ENCODE measurements at regions of chr11 and their contacts with region 1.

Region 1: DNA sequence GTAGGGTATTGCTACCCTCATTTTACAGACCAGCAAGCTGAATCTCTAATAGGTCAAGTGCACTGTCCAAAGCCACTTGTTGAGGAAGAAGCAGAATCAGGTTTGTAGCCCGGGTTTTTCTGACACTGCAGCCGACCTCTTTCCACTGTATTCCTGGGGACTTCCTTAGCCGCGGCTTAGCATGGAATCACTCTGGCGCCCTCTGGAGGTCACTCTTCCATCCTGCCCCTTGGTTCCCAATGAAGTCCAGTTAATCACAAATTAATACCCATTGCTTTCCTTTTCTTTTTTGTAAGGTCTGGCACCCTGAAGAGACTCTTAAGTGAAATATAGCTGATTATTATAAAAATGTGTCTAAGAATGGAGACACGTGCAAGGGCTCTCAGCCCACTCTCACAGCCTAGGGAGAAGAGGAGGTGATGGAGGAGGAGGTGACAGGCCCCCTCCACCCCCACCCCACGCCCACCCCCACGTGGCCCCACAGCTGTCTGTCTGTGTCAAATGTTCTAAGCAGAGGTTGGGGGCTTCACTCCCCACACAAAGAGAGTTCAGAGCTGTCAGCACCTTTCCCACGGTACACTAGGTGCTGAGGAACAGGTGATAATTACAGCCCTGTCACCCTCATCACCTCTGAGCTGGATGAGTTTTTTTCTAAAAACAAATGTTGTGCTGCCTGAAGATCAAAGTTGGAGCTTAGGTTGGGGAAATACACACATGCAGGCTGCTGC is 57.7 kb upstream of the DRD2 start:
- DNase-seq: peak; percentile 69
- CTCF ChIP-seq: peak; percentile 78

Region 2: GRCh38 chr11:113184498-113184897 is 348.4 kb before region 1 on chr11:
- CTCF ChIA-PET with region 1: no interaction called
- POLR2A ChIA-PET with region 1: no interaction called
- DNase-seq: no peak
- CTCF ChIP-seq: no peak

Region 3: GRCh38 chr11:113305440-113306336 is 227.2 kb before region 1 on chr11:
- CTCF ChIA-PET with region 1: interaction called, 70 read pairs
- POLR2A ChIA-PET with region 1: no interaction called
- DNase-seq: peak; percentile 61
- CTCF ChIP-seq: peak; percentile 97

Region 4: GRCh38 chr11:113314389-113315301 is 218.2 kb before region 1 on chr11 and contains the start of gene TTC12:
- CTCF ChIA-PET with region 1: interaction called, 28 read pairs
- POLR2A ChIA-PET with region 1: no interaction called
- DNase-seq: peak; percentile 95
- CTCF ChIP-seq: no peak

Region 5: GRCh38 chr11:113411536-113411935 is 121.3 kb before region 1 on chr11:
- CTCF ChIA-PET with region 1: no interaction called
- POLR2A ChIA-PET with region 1: no interaction called
- DNase-seq: no peak
- CTCF ChIP-seq: no peak

Region 6: GRCh38 chr11:113514856-113515255 is 18.0 kb before region 1 on chr11:
- CTCF ChIA-PET with region 1: interaction called, 34 read pairs
- POLR2A ChIA-PET with region 1: no interaction called
- DNase-seq: no peak
- CTCF ChIP-seq: no peak

Region 7: GRCh38 chr11:113519989-113520613 is 12.8 kb before region 1 on chr11:
- CTCF ChIA-PET with region 1: interaction called, 34 read pairs
- POLR2A ChIA-PET with region 1: no interaction called
- DNase-seq: no peak
- CTCF ChIP-seq: no peak

Region 8: DNA sequence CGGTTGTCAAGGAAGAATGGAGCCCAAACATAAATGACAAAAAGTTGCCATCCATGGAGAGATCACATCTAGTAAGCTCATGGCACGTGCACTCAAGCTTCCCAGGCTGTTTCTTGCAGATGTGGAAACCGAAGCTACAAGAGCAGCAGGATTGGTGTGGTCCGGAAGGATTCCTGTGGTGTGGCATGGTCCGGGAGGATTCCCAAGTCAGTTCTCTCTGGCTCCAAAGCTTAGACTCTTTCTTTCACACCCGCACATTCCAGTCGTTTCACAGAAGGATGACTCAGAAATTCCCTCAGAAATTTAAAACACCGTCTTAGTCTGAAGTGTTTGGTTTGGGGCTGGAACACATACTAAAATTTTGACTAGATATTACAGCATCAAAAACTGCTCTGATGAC is 20.4 kb after region 1 on chr11:
- CTCF ChIA-PET with region 1: no interaction called
- POLR2A ChIA-PET with region 1: no interaction called
- DNase-seq: no peak
- CTCF ChIP-seq: no peak

Region 9: DNA sequence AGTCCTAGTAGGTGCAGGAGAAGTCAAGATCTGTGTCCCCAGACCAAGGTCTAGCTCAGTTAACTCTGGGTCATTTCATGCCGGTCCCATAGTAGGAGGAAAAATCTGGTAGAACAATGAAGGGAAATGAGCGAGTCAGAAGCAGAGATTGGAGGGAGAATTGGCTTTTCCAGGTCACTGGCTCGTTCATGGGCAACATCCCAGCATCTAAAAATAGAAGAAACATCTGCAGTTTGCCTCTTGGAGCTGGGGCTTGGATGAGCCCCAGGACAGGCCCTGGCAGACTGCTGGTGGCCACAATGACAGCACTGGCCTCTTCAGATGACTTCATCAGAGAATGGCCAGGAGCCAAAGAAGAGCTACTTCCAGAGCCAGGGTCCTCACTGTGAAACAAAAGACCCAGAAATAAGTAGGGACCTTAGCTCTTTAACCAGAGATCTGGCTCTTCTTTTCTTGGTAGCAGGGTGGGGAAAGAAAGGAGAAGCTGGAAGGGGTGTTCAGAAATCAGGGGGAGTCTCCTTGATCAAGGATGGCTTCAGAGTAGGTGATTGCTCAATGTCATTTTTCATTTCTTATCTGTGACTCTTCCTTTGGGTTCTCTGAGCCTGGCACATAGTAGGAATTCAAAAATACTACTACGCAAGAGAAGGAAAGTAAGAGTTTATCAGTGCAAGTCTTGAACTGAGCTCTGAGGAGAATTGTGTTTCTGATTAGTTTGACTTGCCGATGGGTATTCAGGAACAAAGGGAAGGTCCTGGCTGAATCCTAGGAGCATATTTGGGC is 70.6 kb after region 1 on chr11:
- CTCF ChIA-PET with region 1: no interaction called
- POLR2A ChIA-PET with region 1: no interaction called
- DNase-seq: no peak
- CTCF ChIP-seq: no peak